GM10248 (cell line): ENCODE measurements at regions of chr13 and their contacts with region 1.

Region 1: DNA sequence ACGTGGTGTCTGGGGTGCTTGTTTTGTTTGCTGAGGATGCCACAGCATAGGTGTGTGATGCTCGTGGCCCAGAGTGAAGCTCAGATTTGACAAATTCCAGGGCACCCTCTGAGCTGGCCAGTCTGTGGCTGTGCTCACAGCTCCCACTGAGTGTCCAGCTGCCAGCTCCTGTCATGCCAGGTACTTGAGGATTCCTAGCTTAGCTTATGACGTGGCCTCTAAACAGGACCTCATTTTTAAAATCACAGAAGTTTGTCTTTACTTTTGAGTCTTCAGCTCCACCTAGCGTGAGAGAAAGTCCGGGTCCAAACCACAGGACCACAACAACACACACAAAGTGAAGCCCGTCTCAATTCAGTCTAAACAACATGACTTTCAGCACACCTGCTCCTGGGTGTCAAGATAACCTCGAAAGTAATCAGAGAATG is 117.3 kb downstream of the RAB20 start:
- DNase-seq: peak; percentile 47
- CTCF ChIP-seq: no peak

Region 2: GRCh38 chr13:110106726-110107125 is 337.5 kb before region 1 on chr13:
- CTCF ChIA-PET with region 1: no interaction called
- POLR2A ChIA-PET with region 1: no interaction called
- DNase-seq: no peak
- CTCF ChIP-seq: no peak

Region 3: GRCh38 chr13:110412132-110412914 is 31.9 kb before region 1 on chr13:
- CTCF ChIA-PET with region 1: interaction called, 15 read pairs
- POLR2A ChIA-PET with region 1: no interaction called
- DNase-seq: peak; percentile 87
- CTCF ChIP-seq: peak; percentile 83

Region 4: GRCh38 chr13:110431425-110432294 is 12.6 kb before region 1 on chr13:
- CTCF ChIA-PET with region 1: interaction called, 10 read pairs
- POLR2A ChIA-PET with region 1: no interaction called
- DNase-seq: no peak
- CTCF ChIP-seq: no peak

Region 5: GRCh38 chr13:110499621-110500281 is 55.5 kb after region 1 on chr13:
- CTCF ChIA-PET with region 1: no interaction called
- POLR2A ChIA-PET with region 1: no interaction called
- DNase-seq: no peak
- CTCF ChIP-seq: no peak